ENCODE measurements at regions of chr3 and their contacts with region 1.

Region 1: GRCh38 chr3:157130467-157131251 is 29.3 kb downstream of the CCNL1 start:
- DNase-seq: peak; percentile 54 to 82
- H3K4me3 ChIP-seq: peak overlapping the region in 2 of 4 experiments; percentile 9 to 45; a peak in 3 of 8 replicates
- H3K27ac ChIP-seq: peak overlapping the region; percentile 68; the same call in 1 of the 2 replicates
- H3K4me1 ChIP-seq: peaks cover 5 to 15% (median 9%) of the 10 kb centered on the region in 4 experiments; a peak in 6 of 7 replicates
- H3K27me3 ChIP-seq: no peaks in the 10 kb centered on the region; a peak in 2 of 7 replicates
- CTCF ChIP-seq: peak; percentile 39 to 76 (median 52)
- EP300 ChIP-seq: no peak
- POLR2A ChIP-seq: peak in 1 of 2 experiments; percentile 32; a peak in 1 of 3 replicates
- RAD21 ChIP-seq: peak; percentile 82 to 83

Region 2: GRCh38 chr3:157088601-157089454 is 41.8 kb before region 1 on chr3:
- CTCF ChIA-PET with region 1: interaction called, 1,014 read pairs
- POLR2A ChIA-PET with region 1: interaction called, 12 read pairs
- DNase-seq: peak; percentile 83 to 95
- H3K4me3 ChIP-seq: peak overlapping the region; percentile 45 to 62 (median 53)
- H3K27ac ChIP-seq: peak overlapping the region; percentile 89
- H3K4me1 ChIP-seq: peaks cover 8 to 20% (median 11%) of the 10 kb centered on the region in 4 experiments; a peak in 6 of 7 replicates
- H3K27me3 ChIP-seq: no peaks in the 10 kb centered on the region
- CTCF ChIP-seq: peak in 1 of 3 experiments; percentile 0; a peak in 1 of 4 replicates
- EP300 ChIP-seq: no peak
- POLR2A ChIP-seq: peak; percentile 54 to 73
- RAD21 ChIP-seq: no peak

Measured in H1 (cell line).